ENCODE measurements at regions of chr13 and their contacts with region 1.

Region 1: GRCh38 chr13:76903544-76904162 is 17.4 kb upstream of the KCTD12 start:
- DNase-seq: peak in 1 of 2 donors; percentile 72
- ATAC-seq: peak; percentile 86
- H3K4me3 ChIP-seq: no peak overlapping the region
- H3K27ac ChIP-seq: no peak overlapping the region
- H3K4me1 ChIP-seq: no peaks in the 10 kb centered on the region
- H3K27me3 ChIP-seq: no peaks in the 10 kb centered on the region

Region 2: GRCh38 chr13:75870397-75870903 is 1033.2 kb before region 1 on chr13:
- intact Hi-C with region 1: loop called (anchors 5 kb)
- DNase-seq: no peak
- ATAC-seq: peak; percentile 81
- H3K4me3 ChIP-seq: peak overlapping the region; percentile 31 to 32
- H3K27ac ChIP-seq: no peak overlapping the region
- H3K4me1 ChIP-seq: no peaks in the 10 kb centered on the region
- H3K27me3 ChIP-seq: no peaks in the 10 kb centered on the region

Region 3: GRCh38 chr13:75876360-75877050 is 1027.1 kb before region 1 on chr13:
- intact Hi-C with region 1: loop called (anchors 5 kb)
- DNase-seq: peak; percentile 51 to 71
- ATAC-seq: peak; percentile 92
- H3K4me3 ChIP-seq: no peak overlapping the region
- H3K27ac ChIP-seq: no peak overlapping the region
- H3K4me1 ChIP-seq: peaks cover 0 to 5% of the 10 kb centered on the region in 2 donors
- H3K27me3 ChIP-seq: no peaks in the 10 kb centered on the region

Region 4: GRCh38 chr13:76473552-76474134 is 430.0 kb before region 1 on chr13:
- intact Hi-C with region 1: loop called in 1 of 2 experiments (anchors 5 kb)
- DNase-seq: peak; percentile 70 to 74
- ATAC-seq: peak; percentile 95
- H3K4me3 ChIP-seq: no peak overlapping the region
- H3K27ac ChIP-seq: no peak overlapping the region
- H3K4me1 ChIP-seq: peaks cover 2% of the 10 kb centered on the region in 2 donors
- H3K27me3 ChIP-seq: no peaks in the 10 kb centered on the region

Region 5: GRCh38 chr13:76677043-76677442 is 226.6 kb before region 1 on chr13:
- intact Hi-C with region 1: loop called in 1 of 2 experiments (anchors 10 kb)
- DNase-seq: peak; percentile 72 to 75
- ATAC-seq: peak; percentile 83
- H3K4me3 ChIP-seq: no peak overlapping the region
- H3K27ac ChIP-seq: no peak overlapping the region
- H3K4me1 ChIP-seq: peaks cover 0 to 3% of the 10 kb centered on the region in 2 donors
- H3K27me3 ChIP-seq: no peaks in the 10 kb centered on the region

Region 6: GRCh38 chr13:76711550-76712182 is 192.0 kb before region 1 on chr13:
- intact Hi-C with region 1: no loop called
- DNase-seq: peak in 1 of 2 donors; percentile 54
- ATAC-seq: peak; percentile 86
- H3K4me3 ChIP-seq: no peak overlapping the region
- H3K27ac ChIP-seq: no peak overlapping the region
- H3K4me1 ChIP-seq: peaks cover 0 to 7% of the 10 kb centered on the region in 2 donors
- H3K27me3 ChIP-seq: no peaks in the 10 kb centered on the region

Region 7: DNA sequence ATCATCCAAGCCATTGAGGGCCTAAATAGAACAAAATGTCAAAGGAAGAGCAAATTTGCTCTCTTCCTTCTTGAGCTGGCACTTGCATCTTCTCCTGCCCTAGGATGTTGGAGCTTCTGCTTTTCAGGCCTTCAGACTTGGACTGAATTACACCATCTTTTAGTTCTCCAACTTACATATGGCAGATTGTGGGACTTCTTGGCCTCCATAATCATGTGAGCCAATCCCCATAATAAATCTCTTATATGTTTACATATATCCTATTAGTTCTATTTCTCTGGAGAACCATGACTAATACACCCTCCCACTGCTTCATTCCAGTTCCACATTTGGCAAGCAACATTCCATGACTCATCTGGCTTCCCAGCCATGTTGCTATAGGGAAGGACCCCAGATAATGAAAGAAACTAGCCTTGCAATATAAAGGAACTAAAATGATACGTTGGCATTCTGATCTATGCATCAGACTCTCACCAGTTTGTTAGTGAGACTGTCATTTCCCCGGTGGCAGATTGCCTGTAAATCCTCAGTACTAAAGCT is 33.7 kb after region 1 on chr13:
- intact Hi-C with region 1: no loop called
- DNase-seq: peak in 1 of 2 donors; percentile 61
- ATAC-seq: peak; percentile 44
- H3K4me3 ChIP-seq: no peak overlapping the region
- H3K27ac ChIP-seq: no peak overlapping the region
- H3K4me1 ChIP-seq: peaks cover 0 to 2% of the 10 kb centered on the region in 2 donors
- H3K27me3 ChIP-seq: no peaks in the 10 kb centered on the region